PC-9 (cell line): ENCODE measurements at regions of chr9 and their contacts with region 1.

Region 1: DNA sequence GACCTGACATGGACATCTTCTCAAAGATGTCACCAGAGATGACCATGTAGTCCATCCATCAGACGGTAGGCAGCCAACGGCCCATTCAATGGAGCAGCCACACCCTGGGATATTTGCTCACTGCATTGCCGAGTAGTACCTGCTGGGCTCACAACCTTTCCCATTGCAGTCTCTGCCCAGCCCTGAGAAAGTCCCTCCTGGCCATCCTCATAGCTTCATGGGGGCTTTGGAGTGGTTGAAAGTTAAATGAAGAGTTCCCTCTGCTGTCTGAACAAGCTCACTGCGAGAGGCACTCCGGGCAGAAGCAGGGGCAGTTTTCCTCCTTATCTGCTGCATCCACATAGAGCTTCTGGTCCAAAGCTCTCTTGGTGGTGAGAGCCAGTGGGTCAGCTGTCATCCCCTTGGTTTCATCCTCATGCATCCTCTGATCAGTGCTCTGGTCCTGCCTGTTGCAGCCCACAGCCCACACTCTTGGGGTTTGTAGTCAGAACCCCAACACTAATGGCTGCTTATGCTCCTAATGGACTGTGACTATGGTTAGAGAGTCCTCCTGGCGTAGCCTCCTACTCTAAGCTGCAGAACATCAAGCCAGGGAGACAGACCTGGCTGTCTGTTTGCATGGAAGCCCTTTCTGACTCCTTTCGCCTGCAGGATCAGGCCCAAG is 23.4 kb downstream of the TNFSF8 start:
- DNase-seq: no peak
- H3K4me3 ChIP-seq: no peak overlapping the region
- H3K27ac ChIP-seq: no peak overlapping the region; the same call in 1 of the 2 replicates
- H3K4me1 ChIP-seq: peaks cover 26% of the 10 kb centered on the region
- H3K27me3 ChIP-seq: peaks cover 11% of the 10 kb centered on the region
- CTCF ChIP-seq: peak; percentile 68

Region 2: GRCh38 chr9:114487607-114488300 is 419.3 kb before region 1 on chr9:
- CTCF ChIA-PET with region 1: no interaction called
- POLR2A ChIA-PET with region 1: no interaction called
- intact Hi-C with region 1: loop called (anchors 10 kb)
- DNase-seq: peak; percentile 66 to 71
- H3K4me3 ChIP-seq: no peak overlapping the region
- H3K27ac ChIP-seq: no peak overlapping the region
- H3K4me1 ChIP-seq: peaks cover 37% of the 10 kb centered on the region
- H3K27me3 ChIP-seq: no peaks in the 10 kb centered on the region
- CTCF ChIP-seq: peak; percentile 93

Region 3: DNA sequence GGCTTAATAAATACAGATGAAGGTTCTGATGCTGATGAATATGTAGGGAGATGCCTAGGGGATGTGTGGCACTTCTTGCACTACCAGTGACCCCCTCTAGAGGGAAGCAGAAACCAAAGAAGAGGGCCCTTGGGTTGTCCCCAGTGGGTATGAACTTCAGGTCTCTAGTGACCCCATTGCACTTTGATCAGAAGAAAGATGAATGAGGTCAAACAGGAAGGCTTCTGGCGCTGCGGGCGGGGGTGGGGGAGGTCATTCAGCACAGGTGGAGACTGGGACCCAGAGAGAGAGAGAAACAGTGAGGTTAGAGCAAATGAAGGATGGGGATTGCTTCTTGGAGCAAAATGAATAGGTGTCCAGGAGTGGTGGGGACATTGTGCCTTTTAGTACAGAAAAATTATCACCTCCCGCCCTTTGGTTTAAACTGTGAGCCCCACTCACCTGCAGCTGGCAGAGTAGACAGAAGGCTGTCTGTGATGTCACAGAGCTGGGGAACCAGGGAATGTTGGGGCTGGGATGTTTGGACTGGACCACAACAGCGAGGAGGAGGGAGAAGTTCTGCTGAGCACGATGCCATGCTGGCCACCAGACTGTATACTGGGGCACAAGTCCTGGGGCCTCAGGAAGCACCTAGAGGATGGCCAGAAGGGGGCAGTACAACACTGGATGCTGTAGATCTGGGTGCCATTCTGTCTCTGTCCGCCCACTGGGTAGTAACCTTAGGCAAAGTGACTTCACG is 225.3 kb before region 1 on chr9 and contains the start of gene TEX48:
- CTCF ChIA-PET with region 1: interaction called, 3 read pairs
- POLR2A ChIA-PET with region 1: no interaction called
- intact Hi-C with region 1: loop called (anchors 1 kb)
- DNase-seq: peak; percentile 48 to 63
- H3K4me3 ChIP-seq: no peak within 1 kb of the TSS
- H3K27ac ChIP-seq: no peak within 1 kb of the TSS
- H3K4me1 ChIP-seq: peaks cover 23% of the 10 kb centered on the region
- H3K27me3 ChIP-seq: no peaks in the 10 kb centered on the region
- CTCF ChIP-seq: peak; percentile 82
- total RNA-seq, gene TEX48: not detected in 2 replicates

Region 4: DNA sequence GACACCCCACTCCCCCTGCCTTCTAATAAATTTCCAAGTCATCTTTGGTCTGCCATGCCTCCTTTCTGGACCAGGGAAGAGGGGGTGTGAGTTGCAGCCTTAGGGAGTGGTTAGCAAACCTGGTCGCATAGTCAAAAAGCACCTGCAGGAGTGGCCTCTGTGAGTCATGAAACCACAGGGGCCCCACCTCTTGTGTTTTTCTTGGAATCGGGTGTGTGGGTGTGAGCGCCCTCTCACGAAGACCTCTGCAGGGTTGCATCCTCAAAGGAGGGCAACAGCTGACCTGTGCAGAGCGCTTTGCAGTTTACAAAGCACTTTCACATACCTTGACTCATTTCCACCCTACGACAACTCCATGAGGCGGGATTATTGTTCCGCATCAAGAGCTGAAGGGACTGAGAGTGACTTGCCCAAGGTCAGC is 188.2 kb before region 1 on chr9:
- CTCF ChIA-PET with region 1: interaction called, 5 read pairs
- POLR2A ChIA-PET with region 1: no interaction called
- intact Hi-C with region 1: loop called (anchors 1 kb)
- DNase-seq: peak; percentile 94 to 98
- H3K4me3 ChIP-seq: no peak overlapping the region
- H3K27ac ChIP-seq: peak overlapping the region; percentile 50
- H3K4me1 ChIP-seq: peaks cover 25% of the 10 kb centered on the region
- H3K27me3 ChIP-seq: no peaks in the 10 kb centered on the region
- CTCF ChIP-seq: no peak; the same call in 1 of the 2 replicates

Region 5: DNA sequence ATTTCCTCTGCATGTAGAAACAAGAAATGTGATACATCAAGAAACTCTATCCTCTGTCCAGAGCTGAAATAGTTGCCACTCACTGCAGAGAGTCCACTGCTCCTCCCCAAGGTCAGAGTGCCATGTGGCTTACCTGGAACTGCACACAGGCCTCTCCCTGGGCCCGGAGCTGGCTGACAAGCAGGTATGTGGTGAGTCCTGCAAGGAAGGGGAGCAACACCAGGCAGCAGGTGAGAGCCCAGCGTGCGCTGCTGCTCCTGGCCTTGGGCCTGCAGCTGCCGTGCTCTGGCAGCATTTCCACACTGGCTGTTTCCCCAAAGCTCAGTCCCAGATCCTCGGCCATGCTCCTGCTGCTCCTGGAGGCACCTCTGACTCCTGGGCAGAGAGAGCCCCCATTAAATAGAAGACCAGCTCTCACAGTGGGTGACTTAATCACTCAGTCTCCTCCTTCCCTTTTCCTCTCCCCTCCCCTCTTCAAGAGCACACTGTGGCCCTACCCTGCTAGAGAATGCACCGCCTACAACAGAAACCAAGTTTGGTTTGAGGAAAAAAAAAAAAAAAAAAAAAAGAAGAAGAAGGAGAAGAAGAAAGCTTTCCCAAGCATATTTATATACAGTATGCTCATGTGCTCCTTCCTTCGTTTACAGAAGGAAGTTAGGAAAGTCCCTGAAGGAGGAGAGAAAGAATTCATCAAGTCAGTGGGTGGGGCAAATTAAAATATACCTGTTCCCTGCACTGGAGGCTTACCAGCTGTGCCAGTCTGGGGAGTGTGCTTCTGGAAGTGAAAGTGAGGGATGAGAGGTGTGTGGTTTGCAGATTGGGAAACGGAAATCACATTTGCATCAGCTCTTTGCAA is 101.1 kb before region 1 on chr9 and contains the start of gene TNFSF15:
- CTCF ChIA-PET with region 1: interaction called, 7 read pairs
- POLR2A ChIA-PET with region 1: no interaction called
- intact Hi-C with region 1: loop called (anchors 1 kb)
- DNase-seq: peak; percentile 82 to 88
- H3K4me3 ChIP-seq: peak within 1 kb of the TSS; percentile 42
- H3K27ac ChIP-seq: peak within 1 kb of the TSS; percentile 89
- H3K4me1 ChIP-seq: peaks cover 50% of the 10 kb centered on the region
- H3K27me3 ChIP-seq: no peaks in the 10 kb centered on the region
- CTCF ChIP-seq: no peak
- total RNA-seq, gene TNFSF15: 0.33 and 0.55 TPM in 2 replicates

Region 6: DNA sequence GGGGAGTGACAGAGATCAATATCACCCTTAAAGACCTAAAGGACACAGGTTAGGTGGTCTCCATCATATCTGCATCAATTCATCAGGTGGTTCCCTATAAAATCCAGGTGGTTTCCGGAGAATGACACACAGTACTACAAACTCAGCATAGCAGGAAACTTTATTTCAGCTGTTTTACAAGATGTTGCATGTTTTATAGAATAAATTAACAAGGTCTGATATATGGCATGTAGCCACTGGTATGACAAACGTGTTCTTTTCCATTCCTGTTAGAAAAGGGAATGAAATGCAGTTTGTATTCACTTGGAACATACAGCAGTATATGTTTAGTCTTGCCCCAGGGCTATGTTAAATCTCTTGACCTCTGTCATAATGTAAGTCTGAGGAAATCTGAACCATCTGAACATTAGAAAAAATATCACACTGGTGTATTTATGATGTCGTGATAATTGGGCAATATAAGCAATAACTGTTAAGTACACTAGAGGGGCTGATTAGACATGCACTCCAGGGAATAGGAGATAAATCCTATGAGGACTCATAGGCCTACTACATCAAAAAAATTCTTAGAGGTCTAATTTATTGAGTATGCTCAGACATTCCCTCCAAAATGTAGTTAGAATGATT is 65.6 kb after region 1 on chr9:
- CTCF ChIA-PET with region 1: no interaction called
- POLR2A ChIA-PET with region 1: no interaction called
- intact Hi-C with region 1: no loop called
- DNase-seq: no peak
- H3K4me3 ChIP-seq: no peak overlapping the region
- H3K27ac ChIP-seq: no peak overlapping the region
- H3K4me1 ChIP-seq: no peaks in the 10 kb centered on the region
- H3K27me3 ChIP-seq: peaks cover 9% of the 10 kb centered on the region
- CTCF ChIP-seq: no peak

Region 7: DNA sequence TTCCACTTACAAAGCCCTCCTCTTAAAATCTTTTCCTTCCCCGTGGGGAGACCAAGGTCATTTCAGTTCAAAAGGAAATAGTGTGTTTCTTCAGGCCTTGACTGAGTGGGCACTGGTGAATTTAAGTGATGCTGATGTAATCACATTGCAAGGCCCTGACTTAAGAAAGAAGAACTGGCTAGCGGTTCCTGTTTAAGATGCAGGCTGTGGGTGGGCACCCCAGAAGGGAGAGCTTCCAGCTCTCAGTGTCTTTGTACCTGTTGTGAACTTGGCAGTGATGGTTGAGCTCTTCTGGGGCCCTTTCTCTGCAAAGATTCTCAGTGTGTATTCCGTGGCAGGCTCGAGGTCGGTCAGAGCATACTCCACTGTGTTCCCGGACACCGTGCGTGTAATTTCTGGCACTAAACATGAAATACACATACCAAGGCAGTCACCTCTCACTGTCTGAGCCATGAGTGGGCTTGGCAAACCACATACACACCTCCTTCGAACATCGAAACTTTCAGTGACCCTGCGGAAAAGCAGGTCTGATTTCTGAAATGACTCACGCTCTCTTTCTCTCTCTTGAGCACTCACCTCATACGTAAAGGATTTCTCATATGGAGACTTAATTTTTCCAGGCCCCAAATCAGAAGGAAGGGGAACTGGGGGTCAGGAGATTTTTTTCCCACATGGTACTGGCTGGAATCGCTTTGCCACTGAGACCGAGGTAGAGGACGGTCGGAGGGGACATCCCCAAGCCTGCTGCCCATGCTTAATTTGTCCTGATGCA is 129.0 kb after region 1 on chr9:
- CTCF ChIA-PET with region 1: no interaction called
- POLR2A ChIA-PET with region 1: no interaction called
- intact Hi-C with region 1: no loop called
- DNase-seq: no peak
- H3K4me3 ChIP-seq: no peak overlapping the region
- H3K27ac ChIP-seq: no peak overlapping the region
- H3K4me1 ChIP-seq: no peaks in the 10 kb centered on the region
- H3K27me3 ChIP-seq: no peaks in the 10 kb centered on the region; the same call in 1 of the 2 replicates
- CTCF ChIP-seq: no peak

Region 8: DNA sequence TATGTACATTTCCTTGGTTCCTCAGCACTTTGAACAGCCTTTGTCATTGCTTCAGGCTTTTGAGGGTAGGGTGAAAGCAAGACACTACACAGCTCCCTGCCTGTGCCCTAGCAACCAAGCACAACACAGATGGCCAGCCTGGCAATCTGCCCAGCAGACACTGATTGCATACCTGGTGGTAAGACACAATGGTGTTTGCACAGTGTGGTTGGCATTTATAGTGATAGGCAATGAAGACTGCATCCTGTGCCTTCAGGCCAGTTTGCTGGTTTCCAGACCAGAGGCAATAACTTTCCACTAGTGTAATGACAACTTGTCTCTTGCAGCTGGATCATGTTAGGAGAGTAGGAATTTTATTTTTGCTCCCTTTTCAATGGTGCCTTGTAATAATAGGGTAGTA is 355.4 kb after region 1 on chr9:
- CTCF ChIA-PET with region 1: no interaction called
- POLR2A ChIA-PET with region 1: no interaction called
- intact Hi-C with region 1: loop called (anchors 5 kb)
- DNase-seq: peak; percentile 99
- H3K4me3 ChIP-seq: no peak overlapping the region
- H3K27ac ChIP-seq: peak overlapping the region; percentile 60
- H3K4me1 ChIP-seq: peaks cover 49% of the 10 kb centered on the region
- H3K27me3 ChIP-seq: no peaks in the 10 kb centered on the region
- CTCF ChIP-seq: no peak